HEK293T (cell line): ENCODE measurements at regions of chr3 and their contacts with region 1.

Region 1: GRCh38 chr3:149086232-149086988 is at the start of gene HLTF:
- DNase-seq: peak; percentile 96

Region 2: DNA sequence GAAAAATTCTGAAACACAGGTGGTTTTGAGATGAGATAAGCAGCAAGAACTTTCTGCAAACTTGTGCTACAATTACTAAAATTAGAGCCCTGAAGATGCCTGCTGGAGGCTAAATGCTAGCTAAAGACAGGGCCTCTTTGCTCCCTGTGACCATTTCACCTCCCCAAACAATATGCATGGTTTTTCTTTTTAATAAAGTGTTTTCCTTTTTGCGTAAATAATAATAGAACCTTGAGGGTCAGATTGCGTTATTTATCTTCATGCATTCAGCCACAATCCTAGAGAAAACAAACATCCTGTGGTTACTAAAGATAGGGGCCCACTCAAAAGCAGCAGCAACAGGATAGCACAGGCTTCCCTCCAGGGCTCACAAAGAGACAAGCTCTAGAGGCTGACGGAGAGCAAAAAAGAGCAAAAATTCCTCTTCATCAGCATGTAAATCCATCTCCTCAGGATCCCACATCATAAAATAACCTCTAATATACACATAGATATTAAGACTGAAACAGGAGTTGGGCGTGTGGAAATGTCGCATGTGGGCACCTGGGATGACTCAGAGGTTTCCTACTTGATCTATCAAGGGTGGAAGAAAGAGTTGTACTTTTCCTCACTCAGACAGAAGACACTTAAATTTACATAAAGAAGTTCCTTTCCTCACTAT is 161.8 kb after region 1 on chr3:
- CTCF ChIA-PET with region 1: no interaction called
- POLR2A ChIA-PET with region 1: no interaction called
- DNase-seq: no peak

Region 3: GRCh38 chr3:149547938-149548668 is 461.7 kb after region 1 on chr3:
- CTCF ChIA-PET with region 1: interaction called, 11 read pairs
- POLR2A ChIA-PET with region 1: no interaction called
- DNase-seq: no peak